Activated naive CD4-positive, alpha-beta T cell treated with anti-CD3 and anti-CD28 coated beads for 36 hours (primary cell): ENCODE measurements at regions of chrX and their contacts with region 1.

Region 1: DNA sequence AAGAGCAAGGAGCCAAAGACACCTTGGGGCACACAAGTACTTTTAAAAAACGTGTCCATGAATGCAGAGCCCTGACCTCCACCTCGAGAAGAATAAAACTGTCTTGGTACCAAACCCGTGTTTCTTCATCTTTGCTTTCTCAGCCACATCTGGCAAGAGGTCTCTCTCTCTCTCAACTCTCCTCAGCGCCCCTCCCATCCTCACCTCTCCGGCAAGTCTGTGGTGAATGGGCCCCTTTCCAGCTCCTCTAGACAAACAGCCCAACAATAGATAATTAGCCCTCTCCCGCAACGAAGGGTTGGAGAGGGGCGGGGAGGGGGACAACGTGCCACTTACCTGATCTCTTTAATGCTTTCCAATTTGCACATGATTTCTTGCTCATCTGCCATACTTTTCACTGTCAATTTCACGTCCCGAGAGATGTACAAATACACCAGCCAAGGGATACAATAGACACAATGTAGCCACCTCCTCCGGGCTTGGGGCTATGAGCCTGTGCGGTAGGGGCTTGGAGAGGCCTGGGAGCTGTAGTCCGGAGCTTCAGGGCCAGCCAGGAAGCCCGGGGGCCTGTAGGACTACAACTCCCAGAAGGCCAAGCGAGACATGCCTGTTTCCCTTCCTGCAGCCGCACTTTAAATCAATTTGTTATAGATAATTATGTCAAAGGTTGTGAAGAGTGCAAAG is at the start of gene ZC4H2:
- DNase-seq: peak; percentile 80
- H3K4me3 Mint-ChIP-seq: peak within 1 kb of the TSS; percentile 96
- H3K27ac Mint-ChIP-seq: peak within 1 kb of the TSS; percentile 80
- H3K4me1 Mint-ChIP-seq: peaks cover 18% of the 10 kb centered on the region
- H3K27me3 Mint-ChIP-seq: no peaks in the 10 kb centered on the region
- total RNA-seq, gene ZC4H2: 15.6 to 16.6 TPM

Region 2: GRCh38 chrX:64394874-64395567 is 581.1 kb before region 1 on chrX and contains the start of gene MTMR8:
- CTCF ChIA-PET with region 1: no interaction called
- intact Hi-C with region 1: loop called (anchors 1 kb)
- DNase-seq: peak; percentile 88
- H3K4me3 Mint-ChIP-seq: peak within 1 kb of the TSS; percentile 89
- H3K27ac Mint-ChIP-seq: peak within 1 kb of the TSS; percentile 75
- H3K4me1 Mint-ChIP-seq: peaks cover 17% of the 10 kb centered on the region
- H3K27me3 Mint-ChIP-seq: no peaks in the 10 kb centered on the region
- total RNA-seq, gene MTMR8: 3.5 to 6.4 TPM

Region 3: DNA sequence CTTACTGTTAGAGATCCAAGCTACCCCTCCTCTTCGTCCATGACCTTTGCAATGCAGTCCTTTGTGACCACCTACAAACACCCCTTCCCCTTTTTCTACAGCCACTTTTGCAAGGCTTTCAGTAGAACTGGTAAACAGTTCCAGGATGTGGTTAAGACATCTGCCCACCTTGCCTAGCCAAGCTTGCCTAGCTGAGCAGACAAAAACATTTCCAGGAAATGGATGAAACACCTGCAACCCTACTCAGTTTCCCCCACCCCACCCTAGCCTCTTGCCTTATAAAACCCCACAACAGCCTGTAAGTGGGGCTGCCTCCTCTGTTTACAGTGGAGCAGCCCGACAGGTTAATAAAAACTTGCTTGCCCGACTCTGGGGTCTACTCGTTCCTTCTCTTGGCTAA is 133.6 kb before region 1 on chrX:
- CTCF ChIA-PET with region 1: interaction called, 4 read pairs
- intact Hi-C with region 1: loop called (anchors 5 kb)
- DNase-seq: peak; percentile 19
- H3K4me3 Mint-ChIP-seq: no peak overlapping the region
- H3K27ac Mint-ChIP-seq: no peak overlapping the region
- H3K4me1 Mint-ChIP-seq: peaks cover 36% of the 10 kb centered on the region
- H3K27me3 Mint-ChIP-seq: no peaks in the 10 kb centered on the region

Region 4: DNA sequence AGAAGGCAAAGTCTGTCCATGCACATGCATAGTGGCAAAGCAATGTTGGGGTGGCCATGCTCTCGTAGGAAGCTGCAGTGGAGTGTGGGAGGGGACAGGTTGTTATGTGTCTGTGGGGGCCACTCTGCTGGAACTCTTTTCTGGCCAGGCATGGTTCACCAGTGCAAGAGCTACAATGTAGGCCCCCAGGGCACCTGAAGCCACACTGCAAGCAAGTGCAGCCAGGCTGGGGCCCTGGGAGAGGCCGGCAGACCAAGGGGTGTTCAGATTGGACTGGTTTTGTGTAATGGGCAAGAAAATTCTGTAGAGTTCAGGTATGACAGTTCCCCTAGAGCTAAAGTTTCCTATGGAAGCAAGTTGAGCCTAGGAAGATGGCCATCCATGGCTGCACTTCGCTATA is 97.1 kb after region 1 on chrX:
- CTCF ChIA-PET with region 1: no interaction called
- intact Hi-C with region 1: no loop called
- DNase-seq: no peak
- H3K4me3 Mint-ChIP-seq: no peak overlapping the region
- H3K27ac Mint-ChIP-seq: no peak overlapping the region
- H3K4me1 Mint-ChIP-seq: peaks cover 3% of the 10 kb centered on the region
- H3K27me3 Mint-ChIP-seq: no peaks in the 10 kb centered on the region

Region 5: GRCh38 chrX:65127842-65128241 is 151.7 kb after region 1 on chrX:
- CTCF ChIA-PET with region 1: no interaction called
- intact Hi-C with region 1: loop called (anchors 10 kb)
- DNase-seq: peak; percentile 6
- H3K4me3 Mint-ChIP-seq: no peak overlapping the region
- H3K27ac Mint-ChIP-seq: peak overlapping the region; percentile 36
- H3K4me1 Mint-ChIP-seq: peaks cover 16% of the 10 kb centered on the region
- H3K27me3 Mint-ChIP-seq: no peaks in the 10 kb centered on the region

Region 6: DNA sequence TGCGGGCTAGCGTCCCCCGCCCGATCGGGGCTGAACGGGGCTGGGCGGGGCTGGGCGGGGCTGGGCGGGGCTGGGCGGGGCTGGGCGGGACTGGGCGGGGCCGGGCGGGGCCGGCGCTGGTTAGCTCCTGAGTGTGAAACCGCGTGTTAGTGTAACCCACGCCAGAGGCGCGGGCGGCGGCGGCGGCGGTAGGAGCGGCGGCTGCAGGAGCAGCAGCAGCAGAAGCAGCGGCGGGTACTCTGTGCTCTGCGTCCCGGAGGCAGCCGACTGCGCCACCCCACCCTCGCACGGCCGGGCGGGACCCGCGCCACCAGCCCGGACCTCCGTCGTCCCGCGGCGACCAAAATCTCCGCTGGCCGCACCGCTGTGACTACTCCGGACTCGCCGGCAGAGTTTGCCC is 430.4 kb after region 1 on chrX:
- CTCF ChIA-PET with region 1: no interaction called
- intact Hi-C with region 1: loop called (anchors 2 kb)
- DNase-seq: peak; percentile 36
- H3K4me3 Mint-ChIP-seq: peak overlapping the region; percentile 69
- H3K27ac Mint-ChIP-seq: no peak overlapping the region
- H3K4me1 Mint-ChIP-seq: peaks cover 2% of the 10 kb centered on the region
- H3K27me3 Mint-ChIP-seq: peaks cover 13% of the 10 kb centered on the region

Region 7: DNA sequence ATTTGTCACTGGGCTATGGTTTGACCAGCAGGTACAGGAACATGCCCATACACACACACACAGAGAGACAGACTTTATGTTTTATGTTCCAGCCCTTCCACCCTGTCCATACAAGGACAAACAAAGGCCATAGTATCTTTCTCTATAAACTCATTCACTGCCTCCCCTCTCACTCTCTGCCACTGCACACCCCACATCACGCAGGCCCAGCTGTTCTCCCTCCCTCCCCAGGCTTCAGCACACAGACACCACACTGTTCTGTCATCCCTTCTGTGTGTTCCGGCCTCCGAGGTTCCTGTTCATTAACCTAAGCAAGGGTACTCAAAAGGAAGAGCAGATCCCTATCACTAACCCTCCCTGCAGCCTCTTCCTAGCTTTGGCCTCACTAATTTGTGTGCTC is 540.6 kb after region 1 on chrX:
- CTCF ChIA-PET with region 1: no interaction called
- intact Hi-C with region 1: no loop called
- DNase-seq: no peak
- H3K4me3 Mint-ChIP-seq: no peak overlapping the region
- H3K27ac Mint-ChIP-seq: no peak overlapping the region
- H3K4me1 Mint-ChIP-seq: peaks cover 2% of the 10 kb centered on the region
- H3K27me3 Mint-ChIP-seq: no peaks in the 10 kb centered on the region

Region 8: DNA sequence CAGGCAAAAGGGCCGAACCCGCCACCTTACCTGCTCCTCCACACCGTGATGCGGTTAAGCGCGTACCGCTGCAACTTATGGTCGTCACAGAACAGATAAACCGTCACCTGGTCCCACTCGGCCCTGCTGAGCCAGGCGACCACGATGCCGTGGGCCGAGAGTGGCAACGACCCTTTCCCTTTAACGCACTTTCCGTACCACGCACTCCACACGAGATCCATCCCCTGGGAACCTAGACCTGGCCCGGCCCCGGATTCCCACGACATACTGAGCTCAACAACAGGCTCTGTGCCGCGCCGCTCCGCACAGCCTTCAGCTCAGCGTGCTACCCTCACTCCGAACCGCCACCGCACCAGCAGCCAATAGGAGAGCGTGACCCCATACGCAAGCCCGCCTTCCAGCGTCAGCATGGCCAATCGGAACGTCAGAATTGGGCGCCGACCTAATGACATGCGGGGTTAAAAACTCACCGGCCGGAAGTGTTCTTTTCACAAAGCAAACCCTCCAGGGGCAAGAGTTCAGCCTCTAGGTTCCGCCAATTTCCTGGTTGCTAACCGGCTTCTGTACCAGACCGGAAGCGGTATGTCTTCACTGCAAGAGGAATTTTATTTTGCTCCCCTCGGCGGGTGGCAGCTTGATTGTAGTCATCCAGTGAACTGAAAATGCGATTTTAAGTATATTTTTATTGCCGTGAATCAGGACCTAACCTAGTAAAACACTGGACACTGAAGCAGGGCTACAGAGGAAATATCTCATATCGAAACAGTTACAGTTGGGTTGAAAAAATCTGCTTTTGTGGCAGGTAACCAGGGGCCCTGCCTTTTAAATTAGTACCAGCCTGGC is 558.5 kb after region 1 on chrX and contains the start of gene LAS1L:
- CTCF ChIA-PET with region 1: no interaction called
- intact Hi-C with region 1: loop called (anchors 1 kb)
- DNase-seq: peak; percentile 93
- H3K4me3 Mint-ChIP-seq: peak within 1 kb of the TSS; percentile 96
- H3K27ac Mint-ChIP-seq: peak within 1 kb of the TSS; percentile 89
- H3K4me1 Mint-ChIP-seq: peaks cover 16% of the 10 kb centered on the region
- H3K27me3 Mint-ChIP-seq: no peaks in the 10 kb centered on the region
- total RNA-seq, gene LAS1L: 60.4 to 61.1 TPM